Left lung (tissue), 14 donors: ENCODE measurements at regions of chr19 and their contacts with region 1.

Region 1: GRCh38 chr19:17205237-17206140 is 9.7 kb upstream of the USE1 start:
- DNase-seq: peak in 3 of 4 donors; percentile 13 to 88 (median 60)
- ATAC-seq: peak; percentile 85
- H3K4me3 ChIP-seq: no peak overlapping the region
- H3K27ac ChIP-seq: no peak overlapping the region
- H3K4me1 ChIP-seq: no peaks in the 10 kb centered on the region
- H3K27me3 ChIP-seq: no peaks in the 10 kb centered on the region
- CTCF ChIP-seq: peak; percentile 43 to 70

Region 2: DNA sequence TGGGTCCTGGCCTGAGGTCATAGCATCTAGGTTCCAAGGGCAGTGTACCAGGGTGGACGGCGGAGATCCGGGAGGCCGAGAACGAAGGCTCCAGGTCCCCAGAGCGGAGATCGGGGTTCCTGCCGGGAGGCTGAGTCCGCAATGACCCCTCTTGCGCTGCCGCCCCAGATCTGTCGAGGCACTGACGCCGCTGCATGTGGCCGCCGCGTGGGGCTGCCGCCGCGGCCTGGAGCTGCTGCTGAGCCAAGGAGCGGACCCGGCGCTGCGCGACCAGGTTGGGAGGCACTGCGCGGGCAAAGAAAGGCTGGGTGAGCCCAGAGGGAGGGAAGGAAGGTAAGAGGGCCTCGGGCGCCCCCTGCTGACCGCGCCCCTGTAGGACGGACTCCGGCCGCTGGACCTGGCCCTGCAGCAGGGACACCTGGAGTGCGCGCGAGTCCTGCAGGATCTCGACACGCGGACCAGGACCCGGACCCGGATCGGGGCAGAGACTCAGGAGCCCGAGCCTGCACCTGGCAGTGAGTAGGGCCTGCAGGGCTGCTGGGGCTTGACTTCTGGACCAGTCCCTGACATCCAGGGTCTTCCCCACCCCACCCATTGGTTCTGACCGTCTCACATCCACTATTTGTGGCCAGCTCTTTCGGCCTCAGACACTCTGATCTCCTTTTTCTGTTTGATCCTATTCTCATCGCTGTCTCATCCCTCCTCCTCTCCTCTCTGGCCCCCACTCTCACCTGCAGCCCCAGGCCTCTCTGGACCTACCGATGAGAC is 77.2 kb after region 1 on chr19:
- intact Hi-C with region 1: loop called in 1 of 2 experiments (anchors 10 kb)
- DNase-seq: peak; percentile 68 to 97 (median 87)
- ATAC-seq: peak; percentile 99
- H3K4me3 ChIP-seq: peak overlapping the region; percentile 16 to 51
- H3K27ac ChIP-seq: no peak overlapping the region
- H3K4me1 ChIP-seq: peaks cover 11 to 24% of the 10 kb centered on the region in 2 donors
- H3K27me3 ChIP-seq: peaks cover 0 to 25% of the 10 kb centered on the region in 2 donors
- CTCF ChIP-seq: peak; percentile 94 to 98